ENCODE measurements at regions of chr18 and their contacts with region 1.

Region 1: GRCh38 chr18:36129300-36130038 is at the starts of genes ELP2 and SLC39A6:
- DNase-seq: peak; percentile 88 to 89
- H3K4me3 ChIP-seq: peak within 1 kb of the TSS; percentile 79
- H3K4me3 Mint-ChIP-seq: peak within 1 kb of the TSS; percentile 81
- H3K27ac Mint-ChIP-seq: peak within 1 kb of the TSS; percentile 87
- H3K4me1 ChIP-seq: 0 out of 2 replicates have a peak, but pooled peaks cover 3% of the 10 kb centered on the region
- H3K4me1 Mint-ChIP-seq: no peaks in the 10 kb centered on the region
- H3K27me3 ChIP-seq: no peaks in the 10 kb centered on the region
- H3K27me3 Mint-ChIP-seq: no peaks in the 10 kb centered on the region
- CTCF ChIP-seq: no peak
- total RNA-seq, gene ELP2: 43.2 and 45.9 TPM in 2 replicates
- total RNA-seq, gene SLC39A6: 19.5 and 20.1 TPM in 2 replicates

Region 2: DNA sequence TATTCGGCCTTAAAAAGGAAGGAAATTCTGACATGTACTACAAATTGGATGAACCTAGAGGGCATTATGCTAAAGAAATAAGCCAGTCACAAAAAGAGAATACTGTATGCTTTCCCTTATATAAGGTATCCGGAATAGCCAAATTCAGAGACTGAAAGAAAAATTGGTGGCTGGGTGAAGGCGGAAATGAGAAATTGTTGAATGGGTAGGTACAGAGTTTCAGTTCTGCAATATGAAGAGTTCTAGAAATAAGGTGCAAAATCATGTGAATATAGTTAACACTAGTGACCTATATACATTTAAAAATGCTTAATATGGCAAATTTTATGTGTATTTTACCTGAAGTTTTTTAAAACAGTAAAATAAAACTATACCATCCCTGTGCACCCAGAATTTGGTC is 113.8 kb before region 1 on chr18:
- CTCF ChIA-PET with region 1: no interaction called
- POLR2A ChIA-PET with region 1: no interaction called
- intact Hi-C with region 1: loop called (anchors 10 kb)
- DNase-seq: no peak
- H3K4me3 ChIP-seq: no peak overlapping the region
- H3K4me3 Mint-ChIP-seq: no peak overlapping the region
- H3K27ac Mint-ChIP-seq: no peak overlapping the region
- H3K4me1 ChIP-seq: no peaks in the 10 kb centered on the region
- H3K4me1 Mint-ChIP-seq: no peaks in the 10 kb centered on the region
- H3K27me3 ChIP-seq: no peaks in the 10 kb centered on the region
- H3K27me3 Mint-ChIP-seq: no peaks in the 10 kb centered on the region
- CTCF ChIP-seq: no peak

Region 3: GRCh38 chr18:36153771-36154170 is 24.3 kb after region 1 on chr18:
- CTCF ChIA-PET with region 1: no interaction called
- POLR2A ChIA-PET with region 1: interaction called, 11 read pairs
- intact Hi-C with region 1: no loop called
- DNase-seq: no peak
- H3K4me3 ChIP-seq: no peak overlapping the region
- H3K4me3 Mint-ChIP-seq: no peak overlapping the region
- H3K27ac Mint-ChIP-seq: no peak overlapping the region
- H3K4me1 ChIP-seq: no peaks in the 10 kb centered on the region
- H3K4me1 Mint-ChIP-seq: no peaks in the 10 kb centered on the region
- H3K27me3 ChIP-seq: no peaks in the 10 kb centered on the region
- H3K27me3 Mint-ChIP-seq: no peaks in the 10 kb centered on the region
- CTCF ChIP-seq: no peak

Region 4: GRCh38 chr18:36186911-36187834 is 57.7 kb after region 1 on chr18 and contains the start of gene MOCOS:
- CTCF ChIA-PET with region 1: no interaction called
- POLR2A ChIA-PET with region 1: no interaction called
- intact Hi-C with region 1: loop called (anchors 5 kb)
- DNase-seq: peak; percentile 78 to 85
- H3K4me3 ChIP-seq: peak within 1 kb of the TSS; percentile 69
- H3K4me3 Mint-ChIP-seq: peak within 1 kb of the TSS; percentile 65
- H3K27ac Mint-ChIP-seq: peak within 1 kb of the TSS; percentile 45
- H3K4me1 ChIP-seq: 0 out of 2 replicates have a peak, but pooled peaks cover 5% of the 10 kb centered on the region
- H3K4me1 Mint-ChIP-seq: peaks cover 10% of the 10 kb centered on the region
- H3K27me3 ChIP-seq: no peaks in the 10 kb centered on the region
- H3K27me3 Mint-ChIP-seq: no peaks in the 10 kb centered on the region
- CTCF ChIP-seq: no peak
- total RNA-seq, gene MOCOS: 4.1 and 5.5 TPM in 2 replicates

Region 5: DNA sequence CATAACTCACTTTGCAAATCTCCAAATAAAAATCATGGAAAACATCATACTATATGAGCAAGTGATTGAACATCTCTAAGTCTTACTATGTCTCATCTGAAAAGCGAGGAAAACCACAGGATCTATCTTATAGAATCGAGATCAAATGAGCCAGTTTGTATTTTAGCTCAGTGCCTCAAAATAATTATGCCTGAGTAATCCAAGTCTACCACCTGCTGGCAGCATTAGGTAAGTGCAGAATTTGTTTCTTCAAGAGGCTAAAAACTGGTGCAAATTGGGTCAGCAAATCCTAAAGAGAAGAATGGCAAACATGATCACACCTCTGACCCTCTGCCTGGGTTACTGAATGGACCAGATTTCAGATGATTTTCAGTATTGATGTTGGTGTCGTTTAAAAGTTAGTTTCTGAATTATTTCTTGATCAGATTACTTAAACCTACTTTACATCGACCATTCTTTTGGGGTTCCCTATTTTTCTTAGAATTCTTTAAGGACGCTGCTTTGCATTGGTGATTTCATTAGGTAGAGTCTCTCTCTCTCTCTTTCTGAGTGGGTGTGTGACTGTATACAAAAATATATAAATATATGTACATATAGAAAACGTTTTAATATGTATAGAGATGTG is 155.3 kb after region 1 on chr18:
- CTCF ChIA-PET with region 1: no interaction called
- POLR2A ChIA-PET with region 1: no interaction called
- intact Hi-C with region 1: loop called (anchors 10 kb)
- DNase-seq: peak in 1 of 2 experiments; percentile 24
- H3K4me3 ChIP-seq: no peak overlapping the region
- H3K4me3 Mint-ChIP-seq: no peak overlapping the region
- H3K27ac Mint-ChIP-seq: no peak overlapping the region
- H3K4me1 ChIP-seq: no peaks in the 10 kb centered on the region
- H3K4me1 Mint-ChIP-seq: no peaks in the 10 kb centered on the region
- H3K27me3 ChIP-seq: no peaks in the 10 kb centered on the region
- H3K27me3 Mint-ChIP-seq: peaks cover 2% of the 10 kb centered on the region
- CTCF ChIP-seq: peak; percentile 45 to 57

Measured in Caco-2 (cell line).